CD14-positive monocyte (primary cell): ENCODE measurements at regions of chr7 and their contacts with region 1.

Region 1: GRCh38 chr7:149422129-149422913 is 38.5 kb downstream of the ZNF777 start:
- DNase-seq: peak; percentile 41 to 67 (median 65)
- H3K4me3 ChIP-seq: peak overlapping the region; percentile 39 to 78 (median 46)
- H3K4me3 Mint-ChIP-seq: peak overlapping the region; percentile 72 to 86
- H3K27ac ChIP-seq: no peak overlapping the region
- H3K27ac Mint-ChIP-seq: no peak overlapping the region
- H3K4me1 ChIP-seq: peaks cover 16 to 20% of the 10 kb centered on the region in 2 donors
- H3K4me1 Mint-ChIP-seq: peaks cover 14% of the 10 kb centered on the region
- H3K27me3 ChIP-seq: peaks cover 7 to 15% of the 10 kb centered on the region in 2 donors
- H3K27me3 Mint-ChIP-seq: peaks cover 11 to 32% (median 16%) of the 10 kb centered on the region in 3 donors
- CTCF ChIP-seq: peak; percentile 58

Region 2: DNA sequence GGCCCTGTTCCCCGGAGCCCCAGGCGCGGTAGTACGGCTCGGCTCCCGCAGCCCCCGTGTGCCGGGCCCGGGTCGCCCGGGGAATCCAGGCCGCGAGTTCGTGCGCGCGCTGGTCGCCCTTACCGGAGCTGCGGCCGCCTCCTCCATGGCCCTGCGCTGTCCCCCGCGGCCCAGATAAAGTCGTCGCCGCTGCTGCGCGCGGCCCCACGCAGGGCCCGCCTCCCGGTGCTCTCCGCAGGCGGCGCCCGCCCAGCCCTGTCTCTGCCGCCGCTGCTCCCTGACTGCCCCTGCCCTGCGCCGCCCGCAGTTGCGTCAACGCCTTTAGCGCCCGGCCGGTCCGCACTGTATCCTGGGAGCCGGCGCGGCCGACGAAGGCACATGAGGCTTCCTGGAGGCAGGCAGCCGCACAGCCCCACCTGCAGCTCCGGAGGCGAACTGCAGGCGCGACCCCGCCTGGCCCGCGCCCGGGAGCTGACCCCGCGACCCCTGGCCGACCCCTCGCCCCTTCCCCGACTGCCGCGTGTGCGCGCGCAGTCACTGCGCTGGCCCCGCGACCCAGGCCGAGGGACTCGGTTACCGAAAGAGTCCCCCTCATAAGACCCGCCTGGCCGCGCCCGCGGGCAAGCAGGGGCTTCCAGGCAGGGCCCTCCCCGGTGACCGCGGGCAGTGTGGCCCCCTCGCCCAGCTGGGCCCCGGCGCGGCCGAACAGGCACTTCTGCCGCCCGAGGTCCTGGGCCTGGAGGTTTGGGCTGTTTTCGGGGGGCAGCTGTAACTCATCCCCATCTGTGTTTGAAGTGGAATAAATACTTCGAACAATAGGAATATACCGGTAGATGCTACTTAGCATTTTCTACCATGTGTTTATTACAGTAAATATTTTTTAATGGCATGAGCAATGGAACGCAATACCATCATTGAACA is 202.4 kb after region 1 on chr7:
- intact Hi-C with region 1: loop called in 1 of 2 experiments (anchors 10 kb)
- DNase-seq: peak; percentile 92 to 93 (median 93)
- H3K4me3 ChIP-seq: peak overlapping the region; percentile 75 to 94 (median 92)
- H3K4me3 Mint-ChIP-seq: peak overlapping the region; percentile 71 to 76
- H3K27ac ChIP-seq: peak overlapping the region in 1 of 2 donors; percentile 73
- H3K27ac Mint-ChIP-seq: peak overlapping the region in 5 of 7 donors; percentile 9 to 86 (median 77)
- H3K4me1 ChIP-seq: peaks cover 33 to 42% of the 10 kb centered on the region in 2 donors
- H3K4me1 Mint-ChIP-seq: peaks cover 47% of the 10 kb centered on the region
- H3K27me3 ChIP-seq: no peaks in the 10 kb centered on the region
- H3K27me3 Mint-ChIP-seq: peaks cover 2 to 10% (median 2%) of the 10 kb centered on the region in 3 donors
- CTCF ChIP-seq: peak; percentile 95

Region 3: DNA sequence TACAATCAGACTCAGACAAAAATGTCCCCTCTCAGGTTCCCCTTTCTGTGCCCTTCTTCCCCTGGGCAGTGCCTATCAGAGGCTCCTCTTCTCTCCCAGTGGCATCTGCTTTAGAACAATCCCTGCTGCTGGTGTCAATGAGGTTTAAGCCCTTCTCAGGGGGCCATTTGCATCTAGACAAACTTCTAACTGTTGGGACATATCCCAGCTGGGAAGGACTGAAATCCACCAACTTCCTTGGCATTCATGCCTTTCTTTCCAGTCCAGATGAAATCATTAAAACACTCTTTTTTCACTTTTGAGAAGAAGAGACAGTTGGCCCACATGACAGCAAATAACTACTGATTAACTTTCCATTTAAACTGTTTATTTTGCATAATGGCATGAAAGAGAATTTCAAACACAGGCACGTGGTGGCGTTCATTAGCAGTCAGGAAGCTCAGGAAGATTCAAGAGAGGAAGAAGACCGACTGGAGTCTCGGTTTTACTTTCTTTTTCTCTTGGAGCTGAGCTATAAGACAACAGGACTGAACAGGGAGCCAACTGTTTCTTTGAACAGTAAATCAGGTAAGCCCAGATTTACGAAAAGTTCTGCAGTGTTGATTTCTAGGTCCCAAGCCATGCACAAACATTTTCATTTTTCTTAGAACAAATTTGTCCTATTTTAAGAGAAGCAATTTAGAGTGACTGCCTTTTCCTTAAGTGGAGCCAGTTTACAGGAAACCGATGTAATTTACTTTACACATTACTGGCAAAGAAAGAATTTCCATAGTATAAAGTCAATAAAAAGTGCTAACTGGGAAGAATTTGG is 1263.1 kb after region 1 on chr7 and contains the start of gene GIMAP2:
- intact Hi-C with region 1: no loop called
- DNase-seq: peak in 2 of 3 donors; percentile 52 to 71
- H3K4me3 ChIP-seq: peak within 1 kb of the TSS; percentile 65 to 100 (median 83)
- H3K4me3 Mint-ChIP-seq: peak within 1 kb of the TSS; percentile 90 to 100
- H3K27ac ChIP-seq: peak within 1 kb of the TSS; percentile 51 to 84
- H3K27ac Mint-ChIP-seq: peak within 1 kb of the TSS; percentile 90 to 96 (median 92)
- H3K4me1 ChIP-seq: peaks cover 47 to 51% of the 10 kb centered on the region in 2 donors
- H3K4me1 Mint-ChIP-seq: peaks cover 73% of the 10 kb centered on the region
- H3K27me3 ChIP-seq: no peaks in the 10 kb centered on the region
- H3K27me3 Mint-ChIP-seq: peaks cover 0 to 5% (median 2%) of the 10 kb centered on the region in 3 donors
- CTCF ChIP-seq: no peak
- polyA plus RNA-seq, gene GIMAP2: 45.6 to 63.8 (median 47.0) TPM